ENCODE measurements at regions of chr20 and their contacts with region 1.

Region 1: DNA sequence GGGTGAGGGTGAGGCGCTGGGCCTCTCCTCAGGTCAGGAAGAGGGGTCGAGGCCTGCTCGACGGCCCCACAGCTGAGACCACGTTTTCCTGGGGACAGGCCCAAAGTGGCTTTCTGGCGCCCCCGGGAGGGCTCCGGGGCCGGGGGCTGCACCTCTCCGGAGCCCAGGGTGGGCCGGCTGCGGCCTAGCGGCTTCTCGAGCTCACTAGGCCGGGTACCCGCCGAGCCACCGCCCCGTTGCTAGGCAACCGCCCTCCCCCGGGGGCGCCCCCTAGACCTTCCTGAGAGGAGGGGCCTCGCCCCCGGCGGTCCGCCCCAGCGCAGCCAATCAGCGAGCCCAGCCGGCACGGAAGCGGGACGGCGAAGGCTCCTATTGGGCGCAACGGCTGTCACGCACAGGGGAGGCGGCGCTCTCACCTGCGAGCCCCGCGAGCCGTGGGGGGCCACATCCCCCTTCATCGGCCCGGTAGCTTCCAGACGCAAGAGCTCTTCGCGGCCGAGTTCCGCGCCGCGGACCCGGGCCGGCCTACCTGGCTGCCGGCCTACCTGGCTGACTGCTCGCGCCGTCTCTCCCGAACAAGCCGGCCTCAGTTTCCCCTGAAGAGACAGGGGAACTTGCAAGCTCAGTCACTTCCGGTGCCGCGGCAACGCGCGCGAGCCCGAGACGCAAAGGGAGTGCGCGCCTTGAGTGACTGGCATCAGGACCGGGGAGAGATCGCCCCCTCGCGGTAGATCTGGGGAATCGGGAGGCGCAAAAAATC is 831 bp upstream of the BCL2L1 start:
- DNase-seq: peak; percentile 97
- H3K4me3 Mint-ChIP-seq: peak overlapping the region; percentile 95
- H3K27ac Mint-ChIP-seq: peak overlapping the region; percentile 97
- H3K4me1 Mint-ChIP-seq: peaks cover 31% of the 10 kb centered on the region
- H3K27me3 Mint-ChIP-seq: no peaks in the 10 kb centered on the region

Region 2: DNA sequence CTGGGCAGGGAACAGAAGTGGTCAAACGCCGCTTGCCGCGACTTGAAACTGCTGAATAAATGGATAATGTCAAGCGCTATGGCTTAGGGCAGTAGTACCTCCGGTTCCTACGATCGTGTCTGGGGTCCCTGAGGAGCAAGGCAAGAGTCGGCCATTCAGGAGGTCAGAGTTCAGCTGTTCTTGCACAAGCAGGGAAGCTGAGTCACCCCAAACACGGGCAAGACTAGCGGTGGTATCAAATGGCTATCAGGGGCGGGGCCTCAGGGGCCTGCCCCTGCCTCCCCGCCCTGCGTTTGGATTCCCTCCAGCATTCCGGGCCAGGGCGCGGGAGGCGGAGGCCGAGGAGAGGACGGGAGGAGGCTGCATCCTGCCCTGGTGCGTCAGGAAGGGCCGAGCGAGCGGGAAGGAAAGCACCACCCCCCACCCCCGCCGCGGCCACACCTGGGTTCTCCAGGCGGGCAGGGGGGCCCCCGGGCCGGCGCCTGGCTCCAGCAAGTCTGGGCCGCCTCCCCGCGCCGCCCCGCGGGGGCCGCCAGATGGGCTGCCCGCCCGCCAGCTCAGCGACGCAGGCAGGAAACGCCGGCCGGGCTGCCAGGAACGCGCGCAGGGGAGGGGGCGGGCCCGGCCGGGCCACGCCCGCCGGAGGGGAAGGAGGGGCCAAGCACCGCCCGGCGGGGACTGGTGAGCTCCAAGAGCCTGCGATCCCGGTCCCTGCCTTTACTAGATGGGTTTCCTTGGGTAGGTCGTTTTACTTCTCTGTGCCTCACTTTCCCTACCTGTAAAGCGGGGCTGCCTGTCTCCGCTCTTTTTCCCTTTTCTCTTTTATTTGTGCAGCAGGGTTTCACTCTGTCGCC is 150.6 kb before region 1 on chr20:
- CTCF ChIA-PET with region 1: interaction called, 24 read pairs
- POLR2A ChIA-PET with region 1: interaction called, 6 read pairs
- DNase-seq: peak; percentile 91
- H3K4me3 Mint-ChIP-seq: peak overlapping the region; percentile 84
- H3K27ac Mint-ChIP-seq: peak overlapping the region; percentile 86
- H3K4me1 Mint-ChIP-seq: peaks cover 23% of the 10 kb centered on the region
- H3K27me3 Mint-ChIP-seq: peaks cover 1% of the 10 kb centered on the region

Region 3: DNA sequence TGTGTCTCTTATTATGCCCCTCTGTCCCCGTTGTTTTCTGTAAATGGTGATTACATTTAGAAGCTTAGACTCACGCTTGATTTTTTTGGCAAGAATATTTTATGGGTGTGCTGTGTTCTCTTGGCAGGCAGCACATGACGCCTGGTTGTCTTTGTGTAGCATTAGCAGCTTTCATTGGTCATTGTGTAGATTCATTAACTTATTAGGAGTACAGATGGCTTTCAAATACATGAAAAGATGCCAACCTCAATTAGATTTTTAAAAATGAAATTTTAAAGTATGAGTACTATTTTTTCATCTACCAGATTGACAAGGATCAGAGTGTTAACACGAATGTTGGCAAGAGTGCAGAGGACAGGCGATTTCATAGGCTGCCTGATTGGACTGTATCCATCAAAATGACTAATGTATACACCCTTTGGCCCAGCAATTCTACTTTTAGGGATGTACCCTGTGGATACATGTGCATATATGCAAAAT is 70.5 kb before region 1 on chr20:
- CTCF ChIA-PET with region 1: interaction called, 609 read pairs
- POLR2A ChIA-PET with region 1: interaction called, 4 read pairs
- DNase-seq: no peak
- H3K4me3 Mint-ChIP-seq: no peak overlapping the region
- H3K27ac Mint-ChIP-seq: no peak overlapping the region
- H3K4me1 Mint-ChIP-seq: no peaks in the 10 kb centered on the region
- H3K27me3 Mint-ChIP-seq: peaks cover 12% of the 10 kb centered on the region

Region 4: GRCh38 chr20:31684153-31685015 is 39.1 kb before region 1 on chr20:
- CTCF ChIA-PET with region 1: interaction called, 24 read pairs
- POLR2A ChIA-PET with region 1: interaction called, 25 read pairs
- DNase-seq: peak; percentile 45
- H3K4me3 Mint-ChIP-seq: no peak overlapping the region
- H3K27ac Mint-ChIP-seq: peak overlapping the region; percentile 69
- H3K4me1 Mint-ChIP-seq: peaks cover 85% of the 10 kb centered on the region
- H3K27me3 Mint-ChIP-seq: no peaks in the 10 kb centered on the region

Region 5: GRCh38 chr20:31712564-31713311 is 10.8 kb before region 1 on chr20:
- CTCF ChIA-PET with region 1: interaction called, 16 read pairs
- POLR2A ChIA-PET with region 1: interaction called, 17 read pairs
- DNase-seq: no peak
- H3K4me3 Mint-ChIP-seq: no peak overlapping the region
- H3K27ac Mint-ChIP-seq: peak overlapping the region; percentile 34
- H3K4me1 Mint-ChIP-seq: peaks cover 92% of the 10 kb centered on the region
- H3K27me3 Mint-ChIP-seq: no peaks in the 10 kb centered on the region

Measured in activated CD4-positive, alpha-beta memory T cell treated with anti-CD3 and anti-CD28 coated beads, Interleukin-2, amount 10 ng/mL, durations not matched to agents 7 days and 5 days (primary cell).